Activated CD4-positive, alpha-beta T cell treated with anti-CD3 and anti-CD28 coated beads, Interleukin-2, amount 10 ng/mL, durations not matched to agents 24 days and 14 days (primary cell): ENCODE measurements at regions of chr5 and their contacts with region 1.

Region 1: GRCh38 chr5:107919969-107920368 is 249.2 kb upstream of the EFNA5 start:
- DNase-seq: peak; percentile 57
- H3K4me3 Mint-ChIP-seq: peak overlapping the region; percentile 20
- H3K27ac Mint-ChIP-seq: peak overlapping the region; percentile 40
- H3K4me1 Mint-ChIP-seq: peaks cover 42% of the 10 kb centered on the region
- H3K27me3 Mint-ChIP-seq: no peaks in the 10 kb centered on the region

Region 2: DNA sequence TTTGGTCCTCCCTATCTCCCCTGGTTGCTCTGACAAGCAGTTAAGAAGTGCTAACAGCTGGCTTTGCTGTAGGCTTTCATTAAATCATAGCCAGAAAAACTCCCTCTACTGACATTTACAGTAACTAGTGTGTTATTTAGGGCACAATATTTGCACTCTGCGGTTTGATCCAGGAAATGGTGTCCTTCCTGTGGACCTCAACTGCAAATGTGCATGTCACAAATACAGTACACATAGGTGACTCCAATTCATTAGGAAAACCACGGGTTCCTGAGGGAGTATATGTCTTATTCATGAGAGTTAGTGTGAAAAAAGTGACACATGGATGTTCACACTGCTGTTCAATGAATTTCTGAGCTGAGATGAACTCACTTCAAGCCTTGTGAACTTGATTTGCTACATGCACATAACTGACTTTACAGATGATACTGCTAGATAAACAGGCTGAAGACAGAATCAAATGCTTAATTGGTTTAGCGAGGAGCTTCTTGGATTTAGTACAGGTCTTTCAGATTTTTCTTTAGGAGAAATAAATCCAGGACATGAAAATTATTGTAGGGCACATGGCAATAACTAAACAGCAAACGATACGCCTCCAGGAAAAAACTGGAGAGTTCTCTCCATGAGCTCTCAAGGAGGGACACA is 530.7 kb before region 1 on chr5:
- intact Hi-C with region 1: loop called (anchors 2 kb)
- DNase-seq: peak; percentile 78
- H3K4me3 Mint-ChIP-seq: peak overlapping the region; percentile 33
- H3K27ac Mint-ChIP-seq: peak overlapping the region; percentile 85
- H3K4me1 Mint-ChIP-seq: peaks cover 20% of the 10 kb centered on the region
- H3K27me3 Mint-ChIP-seq: peaks cover 4% of the 10 kb centered on the region

Region 3: GRCh38 chr5:107958856-107959255 is 38.9 kb after region 1 on chr5:
- intact Hi-C with region 1: loop called (anchors 5 kb)
- DNase-seq: no peak
- H3K4me3 Mint-ChIP-seq: no peak overlapping the region
- H3K27ac Mint-ChIP-seq: peak overlapping the region; percentile 72
- H3K4me1 Mint-ChIP-seq: peaks cover 5% of the 10 kb centered on the region
- H3K27me3 Mint-ChIP-seq: no peaks in the 10 kb centered on the region

Region 4: GRCh38 chr5:108003178-108003577 is 83.2 kb after region 1 on chr5:
- intact Hi-C with region 1: loop called (anchors 5 kb)
- DNase-seq: peak; percentile 84
- H3K4me3 Mint-ChIP-seq: peak overlapping the region; percentile 52
- H3K27ac Mint-ChIP-seq: peak overlapping the region; percentile 72
- H3K4me1 Mint-ChIP-seq: peaks cover 16% of the 10 kb centered on the region
- H3K27me3 Mint-ChIP-seq: peaks cover 1% of the 10 kb centered on the region

Region 5: GRCh38 chr5:108381954-108382783 is 462.2 kb after region 1 on chr5 and contains the start of gene FBXL17:
- intact Hi-C with region 1: loop called (anchors 10 kb)
- DNase-seq: peak; percentile 97
- H3K4me3 Mint-ChIP-seq: peak within 1 kb of the TSS; percentile 84
- H3K27ac Mint-ChIP-seq: peak within 1 kb of the TSS; percentile 91
- H3K4me1 Mint-ChIP-seq: peaks cover 22% of the 10 kb centered on the region
- H3K27me3 Mint-ChIP-seq: no peaks in the 10 kb centered on the region
- total RNA-seq, gene FBXL17: 7.5 and 8.6 TPM in 2 replicates